Body of pancreas (tissue), 4 donors: ENCODE measurements at regions of chr17 and their contacts with region 1.

Region 1: GRCh38 chr17:57855391-57856035 is 5.7 kb upstream of the MRPS23 start:
- DNase-seq: peak in 1 of 4 donors; percentile 58
- ATAC-seq: no peak
- H3K4me3 ChIP-seq: no peak overlapping the region
- H3K27ac ChIP-seq: peak overlapping the region in 1 of 4 donors; percentile 42
- H3K4me1 ChIP-seq: peaks cover 69% of the 10 kb centered on the region
- H3K27me3 ChIP-seq: no peaks in the 10 kb centered on the region
- CTCF ChIP-seq: no peak
- POLR2A ChIP-seq: no peak

Region 2: DNA sequence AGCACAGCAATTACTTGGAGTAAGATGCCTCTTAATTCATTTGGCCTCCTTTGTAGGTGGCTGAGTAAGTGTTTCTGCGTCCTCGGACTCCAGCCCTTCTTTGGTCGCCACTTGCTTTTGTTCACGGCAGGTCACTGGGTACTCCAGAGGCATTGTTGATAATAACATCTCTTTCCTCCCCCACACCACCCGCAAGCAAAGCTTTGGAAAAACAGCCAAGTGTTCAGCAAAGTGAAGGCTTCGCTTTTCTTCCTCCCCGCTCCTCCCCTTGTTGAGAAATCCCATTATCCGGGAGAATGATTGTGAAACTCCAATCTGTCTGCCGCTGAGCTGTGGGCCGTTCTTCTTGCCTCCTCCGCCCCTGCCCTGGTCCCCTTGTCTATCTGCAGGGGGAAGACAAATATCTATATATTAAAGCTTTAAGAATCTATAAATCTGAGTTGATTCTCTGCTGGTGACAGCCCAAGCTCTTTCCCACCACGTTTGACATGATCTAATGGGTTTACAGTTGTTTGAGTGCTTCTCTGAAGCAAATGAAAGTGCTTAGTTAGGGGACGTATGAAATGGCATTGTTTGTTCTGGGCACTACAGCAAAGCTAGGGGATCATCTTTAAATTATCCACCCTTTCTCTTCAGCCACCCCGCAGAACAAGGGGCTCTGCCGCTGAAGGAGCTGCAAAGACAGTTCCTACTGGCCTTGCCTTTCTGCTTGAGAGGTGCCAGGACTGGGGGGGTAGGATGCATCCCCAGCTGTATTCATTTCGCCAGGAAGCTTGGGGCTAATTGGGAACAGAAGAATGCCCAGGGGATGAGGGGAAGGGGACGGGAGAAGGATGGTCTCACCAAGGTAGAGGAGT is 277.5 kb before region 1 on chr17:
- intact Hi-C with region 1: no loop called
- DNase-seq: peak in 3 of 4 donors; percentile 19 to 38 (median 21)
- ATAC-seq: peak; percentile 45
- H3K4me3 ChIP-seq: no peak overlapping the region
- H3K27ac ChIP-seq: peak overlapping the region in 1 of 4 donors; percentile 38
- H3K4me1 ChIP-seq: no peaks in the 10 kb centered on the region
- H3K27me3 ChIP-seq: no peaks in the 10 kb centered on the region
- CTCF ChIP-seq: no peak
- POLR2A ChIP-seq: no peak

Region 3: DNA sequence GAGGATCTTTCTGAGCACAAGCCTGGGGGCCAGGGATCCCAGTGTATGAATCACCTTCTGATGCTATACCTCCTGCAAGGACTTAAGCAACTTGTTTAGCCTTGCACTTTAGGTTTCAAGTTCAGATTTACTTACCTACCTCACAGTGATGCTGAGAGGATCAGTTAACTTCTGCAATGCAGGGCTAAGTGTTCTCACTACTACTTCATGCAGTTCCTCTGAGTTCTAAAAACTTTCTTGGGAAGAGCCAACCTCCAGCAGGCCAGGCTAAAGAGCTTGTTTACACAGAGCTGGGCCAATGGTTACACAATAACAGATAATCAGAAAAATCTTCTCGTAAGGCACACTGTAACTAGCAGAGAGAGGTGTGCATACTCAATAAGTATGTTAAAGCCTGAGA is 119.5 kb after region 1 on chr17:
- intact Hi-C with region 1: no loop called
- DNase-seq: no peak
- ATAC-seq: peak; percentile 74
- H3K4me3 ChIP-seq: no peak overlapping the region
- H3K27ac ChIP-seq: peak overlapping the region in 2 of 4 donors; percentile 2 to 10
- H3K4me1 ChIP-seq: peaks cover 14% of the 10 kb centered on the region
- H3K27me3 ChIP-seq: no peaks in the 10 kb centered on the region
- CTCF ChIP-seq: no peak
- POLR2A ChIP-seq: no peak

Region 4: GRCh38 chr17:57993471-57994365 is 138.2 kb after region 1 on chr17:
- intact Hi-C with region 1: loop called (anchors 5 kb)
- DNase-seq: no peak
- ATAC-seq: no peak
- H3K4me3 ChIP-seq: no peak overlapping the region
- H3K27ac ChIP-seq: peak overlapping the region in 2 of 4 donors; percentile 20 to 29
- H3K4me1 ChIP-seq: peaks cover 28% of the 10 kb centered on the region
- H3K27me3 ChIP-seq: no peaks in the 10 kb centered on the region
- CTCF ChIP-seq: no peak
- POLR2A ChIP-seq: no peak